WTC11 (cell line): ENCODE measurements at regions of chr5 and their contacts with region 1.

Region 1: GRCh38 chr5:172188033-172188892 is at the start of gene STK10:
- DNase-seq: peak; percentile 93
- ATAC-seq: peak; percentile 89
- H3K4me3 Mint-ChIP-seq: peak within 1 kb of the TSS; percentile 93
- H3K27ac Mint-ChIP-seq: peak within 1 kb of the TSS; percentile 38; the same call in 1 of the 2 replicates
- H3K4me1 Mint-ChIP-seq: peaks cover 28% of the 10 kb centered on the region
- H3K27me3 Mint-ChIP-seq: peaks cover 14% of the 10 kb centered on the region
- CTCF ChIP-seq: peak; percentile 38; the same call in 1 of the 2 replicates
- total RNA-seq, gene STK10: 13.1 to 20.5 TPM (median 15.0 TPM) in 3 replicates

Region 2: GRCh38 chr5:172095502-172096206 is 92.6 kb before region 1 on chr5:
- CTCF ChIA-PET with region 1: interaction called, 10 read pairs
- POLR2A ChIA-PET with region 1: no interaction called
- DNase-seq: no peak
- ATAC-seq: peak; percentile 83
- H3K4me3 Mint-ChIP-seq: no peak overlapping the region
- H3K27ac Mint-ChIP-seq: peak overlapping the region; percentile 60; the same call in 1 of the 2 replicates
- H3K4me1 Mint-ChIP-seq: peaks cover 3% of the 10 kb centered on the region
- H3K27me3 Mint-ChIP-seq: no peaks in the 10 kb centered on the region
- CTCF ChIP-seq: no peak

Region 3: GRCh38 chr5:172106511-172107356 is 81.5 kb before region 1 on chr5:
- CTCF ChIA-PET with region 1: interaction called, 49 read pairs
- POLR2A ChIA-PET with region 1: no interaction called
- DNase-seq: peak; percentile 85
- ATAC-seq: peak; percentile 32
- H3K4me3 Mint-ChIP-seq: peak overlapping the region; percentile 25; the same call in 1 of the 2 replicates
- H3K27ac Mint-ChIP-seq: no peak overlapping the region
- H3K4me1 Mint-ChIP-seq: peaks cover 46% of the 10 kb centered on the region
- H3K27me3 Mint-ChIP-seq: no peaks in the 10 kb centered on the region
- CTCF ChIP-seq: peak; percentile 98

Region 4: GRCh38 chr5:172123269-172123692 is 65.0 kb before region 1 on chr5:
- CTCF ChIA-PET with region 1: interaction called, 17 read pairs
- POLR2A ChIA-PET with region 1: no interaction called
- DNase-seq: no peak
- ATAC-seq: peak; percentile 86
- H3K4me3 Mint-ChIP-seq: no peak overlapping the region
- H3K27ac Mint-ChIP-seq: no peak overlapping the region
- H3K4me1 Mint-ChIP-seq: no peaks in the 10 kb centered on the region
- H3K27me3 Mint-ChIP-seq: 0 out of 2 replicates have a peak, but pooled peaks cover 2% of the 10 kb centered on the region
- CTCF ChIP-seq: no peak

Region 5: DNA sequence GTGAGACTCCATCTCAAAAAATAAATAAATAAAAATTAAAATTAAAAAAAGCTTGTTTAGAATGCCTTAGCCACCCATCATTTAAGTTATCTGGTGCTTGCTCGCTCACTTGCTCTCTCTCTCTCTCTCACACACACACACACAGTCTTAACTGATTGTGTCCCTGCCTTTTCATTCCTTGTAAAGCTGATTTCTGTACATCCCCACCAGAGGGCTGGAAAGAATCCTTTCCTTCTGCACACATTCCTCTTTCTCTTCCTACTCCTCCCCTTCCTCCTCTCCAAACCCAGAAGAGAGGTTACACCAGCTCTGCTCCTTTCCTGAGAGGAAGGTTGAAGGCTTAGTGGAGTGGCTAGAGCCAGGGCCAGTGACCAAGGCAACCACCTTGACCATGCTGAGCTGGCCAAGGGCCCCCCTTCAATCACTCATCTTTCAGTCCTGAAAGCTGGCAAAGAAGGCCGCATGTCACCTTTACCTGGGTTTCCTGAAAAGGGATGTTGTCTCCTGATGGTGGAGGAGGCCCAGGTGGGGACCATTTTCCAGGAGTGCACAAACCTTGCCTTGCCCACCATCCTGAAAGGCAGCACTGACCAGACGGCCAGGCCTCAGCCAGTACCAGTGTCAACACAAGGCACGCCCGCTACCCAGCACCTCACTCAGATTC is 25.8 kb before region 1 on chr5:
- CTCF ChIA-PET with region 1: interaction called, 10 read pairs
- POLR2A ChIA-PET with region 1: no interaction called
- DNase-seq: no peak
- ATAC-seq: no peak
- H3K4me3 Mint-ChIP-seq: no peak overlapping the region
- H3K27ac Mint-ChIP-seq: peak overlapping the region; percentile 85; the same call in 1 of the 2 replicates
- H3K4me1 Mint-ChIP-seq: no peaks in the 10 kb centered on the region
- H3K27me3 Mint-ChIP-seq: no peaks in the 10 kb centered on the region
- CTCF ChIP-seq: no peak

Region 6: DNA sequence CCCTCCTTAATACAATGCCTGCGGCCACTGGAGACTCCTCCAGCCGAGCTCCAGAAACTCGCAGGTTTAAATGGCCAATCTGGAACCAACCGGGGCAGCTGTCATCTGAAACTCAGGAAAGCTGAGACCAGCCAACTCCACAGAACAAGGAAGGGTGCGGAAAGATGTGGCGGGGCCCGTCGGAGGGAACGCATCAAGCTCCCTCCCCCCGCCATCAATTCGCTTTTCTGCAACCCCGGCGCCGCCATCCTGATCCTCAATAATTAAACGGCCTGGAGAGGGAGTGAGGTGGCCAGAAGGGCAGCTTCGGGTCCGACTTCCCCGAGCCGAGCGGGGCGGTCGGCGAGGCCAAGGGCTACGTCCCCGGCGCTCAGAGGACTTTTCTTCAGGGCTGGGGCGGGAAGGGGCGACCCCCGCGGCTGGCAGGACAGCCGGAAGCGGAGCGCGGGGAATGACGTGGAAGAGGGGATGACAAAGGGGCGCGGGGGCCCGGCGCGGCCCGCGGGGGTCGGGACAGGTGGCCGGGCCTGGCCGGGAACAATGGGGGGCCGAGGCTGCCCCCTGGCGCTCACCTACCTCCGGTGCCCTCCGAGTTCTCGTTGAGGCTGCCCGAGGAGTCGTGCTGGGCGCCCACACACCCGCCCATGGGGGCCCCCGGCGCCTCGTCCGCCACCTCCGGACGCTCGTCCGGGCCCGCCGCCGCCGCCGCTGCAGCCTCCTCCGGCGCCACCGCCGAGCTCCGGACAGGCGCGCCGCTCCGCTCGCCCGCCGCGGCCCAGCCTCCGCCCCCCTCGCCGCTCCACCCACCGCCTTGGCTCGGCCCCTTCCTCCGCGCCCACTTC is 95.0 kb after region 1 on chr5 and contains the start of gene UBTD2:
- CTCF ChIA-PET with region 1: interaction called, 14 read pairs
- POLR2A ChIA-PET with region 1: no interaction called
- DNase-seq: peak; percentile 81
- ATAC-seq: peak; percentile 83
- H3K4me3 Mint-ChIP-seq: peak within 1 kb of the TSS; percentile 95
- H3K27ac Mint-ChIP-seq: peak within 1 kb of the TSS; percentile 89
- H3K4me1 Mint-ChIP-seq: peaks cover 32% of the 10 kb centered on the region
- H3K27me3 Mint-ChIP-seq: peaks cover 10% of the 10 kb centered on the region
- CTCF ChIP-seq: no peak
- total RNA-seq, gene UBTD2: 22.7 to 26.2 TPM (median 25.9 TPM) in 3 replicates

Region 7: GRCh38 chr5:172293054-172293744 is 104.9 kb after region 1 on chr5:
- CTCF ChIA-PET with region 1: interaction called, 25 read pairs
- POLR2A ChIA-PET with region 1: no interaction called
- DNase-seq: peak; percentile 53
- ATAC-seq: peak; percentile 98
- H3K4me3 Mint-ChIP-seq: no peak overlapping the region
- H3K27ac Mint-ChIP-seq: no peak overlapping the region
- H3K4me1 Mint-ChIP-seq: no peaks in the 10 kb centered on the region
- H3K27me3 Mint-ChIP-seq: peaks cover 7% of the 10 kb centered on the region; the same call in 1 of the 2 replicates
- CTCF ChIP-seq: no peak; the same call in 1 of the 2 replicates

Region 8: DNA sequence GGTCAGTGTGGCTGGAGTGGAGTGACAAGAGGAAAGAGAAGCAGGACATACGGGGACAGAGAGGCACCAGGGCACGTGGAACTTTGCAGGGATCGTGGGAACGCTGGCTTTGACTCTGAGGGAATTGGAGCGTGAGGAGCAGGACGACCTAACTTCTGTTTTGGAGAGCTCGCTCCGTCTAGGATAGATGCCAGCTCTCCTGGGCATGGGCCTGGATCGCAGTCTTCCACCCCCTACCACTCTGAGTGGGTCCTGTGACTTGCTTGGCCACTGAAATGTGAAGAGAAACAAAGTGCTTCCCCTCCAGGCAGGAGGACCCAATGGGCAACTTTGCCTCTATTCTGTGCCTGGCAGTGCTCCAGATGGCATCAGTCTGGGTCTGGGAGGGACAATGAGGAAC is 274.8 kb after region 1 on chr5:
- CTCF ChIA-PET with region 1: no interaction called
- POLR2A ChIA-PET with region 1: no interaction called
- DNase-seq: no peak
- ATAC-seq: no peak
- H3K4me3 Mint-ChIP-seq: no peak overlapping the region
- H3K27ac Mint-ChIP-seq: no peak overlapping the region
- H3K4me1 Mint-ChIP-seq: peaks cover 18% of the 10 kb centered on the region
- H3K27me3 Mint-ChIP-seq: peaks cover 51% of the 10 kb centered on the region
- CTCF ChIP-seq: no peak